Keratinocyte (primary cell): ENCODE measurements at regions of chr3 and their contacts with region 1.

Region 1: GRCh38 chr3:11201246-11202024 is 47.1 kb downstream of the HRH1 start:
- DNase-seq: no peak
- H3K4me3 ChIP-seq: peak overlapping the region in 1 of 3 experiments; percentile 17
- H3K27ac ChIP-seq: peak overlapping the region; percentile 62
- H3K4me1 ChIP-seq: peaks cover 36% of the 10 kb centered on the region
- H3K27me3 ChIP-seq: no peaks in the 10 kb centered on the region
- CTCF ChIP-seq: no peak

Region 2: GRCh38 chr3:10964537-10965167 is 236.8 kb before region 1 on chr3:
- dilution Hi-C with region 1: loop called (anchors 10 kb)
- DNase-seq: no peak
- H3K4me3 ChIP-seq: no peak overlapping the region
- H3K27ac ChIP-seq: no peak overlapping the region
- H3K4me1 ChIP-seq: no peaks in the 10 kb centered on the region
- H3K27me3 ChIP-seq: peaks cover 45% of the 10 kb centered on the region
- CTCF ChIP-seq: no peak

Region 3: DNA sequence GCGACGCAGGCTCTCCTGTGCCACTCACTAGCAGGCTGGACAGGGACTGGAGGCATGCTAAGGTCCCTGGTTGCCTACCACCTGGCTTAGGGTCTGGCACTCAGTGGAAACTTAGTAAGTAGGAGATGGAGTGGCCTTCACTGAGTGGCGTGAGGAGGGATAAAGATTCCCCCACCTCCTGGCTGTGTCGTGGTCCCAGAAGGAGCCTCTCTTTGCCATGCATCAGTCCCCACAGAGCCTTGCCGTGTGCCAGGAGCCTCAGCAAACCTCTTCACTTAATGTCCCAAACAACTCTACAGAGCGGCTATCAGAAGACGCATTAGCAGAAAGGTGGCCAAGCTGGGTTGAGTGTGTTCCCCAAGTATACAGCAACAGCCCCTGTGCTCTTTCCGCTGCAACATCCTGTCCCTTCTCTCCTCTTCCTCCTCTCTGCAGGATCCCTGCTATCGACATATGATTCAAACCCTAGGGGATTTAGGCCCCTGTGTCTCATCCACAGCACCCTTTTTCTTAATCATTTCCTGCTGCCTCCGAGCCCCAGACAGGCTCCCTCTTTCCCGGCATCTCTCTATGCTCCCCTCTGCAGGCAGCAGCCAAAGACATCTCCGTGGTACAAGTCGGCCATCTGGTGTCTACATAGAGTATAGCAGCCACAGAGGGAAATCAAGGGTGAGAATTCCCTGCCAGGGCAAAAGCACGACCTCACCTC is 142.2 kb before region 1 on chr3:
- dilution Hi-C with region 1: loop called (anchors 10 kb)
- DNase-seq: peak; percentile 7
- H3K4me3 ChIP-seq: no peak overlapping the region
- H3K27ac ChIP-seq: no peak overlapping the region
- H3K4me1 ChIP-seq: peaks cover 11% of the 10 kb centered on the region
- H3K27me3 ChIP-seq: no peaks in the 10 kb centered on the region
- CTCF ChIP-seq: peak; percentile 85 to 95 (median 91)